Ovary (tissue), 10 donors: ENCODE measurements at regions of chr7 and their contacts with region 1.

Region 1: DNA sequence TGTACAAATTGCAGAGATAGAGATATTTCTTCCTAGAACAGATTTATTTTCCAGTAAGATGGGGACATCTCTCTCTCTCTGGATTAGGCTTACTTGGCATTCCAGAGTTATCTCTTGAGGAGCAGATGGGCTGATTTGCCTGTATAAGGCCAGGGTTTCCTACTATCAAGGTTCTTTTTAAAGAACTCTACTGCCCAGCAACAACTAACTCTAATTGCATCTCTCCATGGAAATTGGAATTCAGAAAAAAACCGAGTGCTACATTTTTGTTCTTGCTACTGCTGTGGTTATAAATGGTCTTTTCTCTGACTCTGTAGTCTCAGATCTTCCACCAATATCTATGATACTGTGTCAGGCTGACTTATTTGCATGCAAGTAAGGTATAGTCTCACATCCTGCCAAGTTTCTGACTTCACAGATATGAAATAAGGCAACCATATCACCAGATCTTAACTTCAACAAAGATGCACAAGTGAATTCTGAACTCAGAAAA is 161.1 kb downstream of the CRPPA start:
- DNase-seq: no peak
- H3K4me3 ChIP-seq: no peak overlapping the region
- H3K27ac ChIP-seq: no peak overlapping the region
- H3K4me1 ChIP-seq: no peaks in the 10 kb centered on the region
- H3K27me3 ChIP-seq: no peaks in the 10 kb centered on the region
- CTCF ChIP-seq: no peak
- EP300 ChIP-seq: no peak
- POLR2A ChIP-seq: no peak

Region 2: DNA sequence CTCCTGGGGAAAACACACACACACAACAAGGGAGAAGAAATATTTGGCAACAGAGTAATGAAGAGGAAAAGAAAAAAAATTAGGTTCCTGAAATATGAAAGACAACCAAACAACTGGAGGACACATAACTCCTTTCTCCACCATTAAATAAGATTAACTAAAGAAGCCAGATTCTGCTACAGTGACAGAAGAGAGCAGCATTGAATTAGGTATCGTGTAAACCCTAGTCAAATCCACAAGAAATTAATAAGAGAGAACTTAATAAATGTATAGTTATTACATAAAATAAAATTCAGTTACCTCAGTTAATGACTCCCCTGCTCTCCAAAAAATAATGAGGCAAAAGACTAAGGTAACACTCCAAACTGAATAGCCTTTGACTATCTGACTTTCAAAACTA is 145.6 kb before region 1 on chr7:
- intact Hi-C with region 1: no loop called
- DNase-seq: no peak
- H3K4me3 ChIP-seq: no peak overlapping the region
- H3K27ac ChIP-seq: no peak overlapping the region
- H3K4me1 ChIP-seq: no peaks in the 10 kb centered on the region
- H3K27me3 ChIP-seq: no peaks in the 10 kb centered on the region
- CTCF ChIP-seq: no peak
- EP300 ChIP-seq: no peak
- POLR2A ChIP-seq: no peak

Region 3: GRCh38 chr7:16129431-16130116 is 130.7 kb before region 1 on chr7:
- intact Hi-C with region 1: no loop called
- DNase-seq: no peak
- H3K4me3 ChIP-seq: no peak overlapping the region
- H3K27ac ChIP-seq: no peak overlapping the region
- H3K4me1 ChIP-seq: no peaks in the 10 kb centered on the region
- H3K27me3 ChIP-seq: no peaks in the 10 kb centered on the region
- CTCF ChIP-seq: no peak
- EP300 ChIP-seq: no peak
- POLR2A ChIP-seq: no peak

Region 4: GRCh38 chr7:16344927-16345326 is 84.6 kb after region 1 on chr7:
- intact Hi-C with region 1: loop called in 1 of 4 experiments (anchors 5 kb)
- DNase-seq: no peak
- H3K4me3 ChIP-seq: no peak overlapping the region
- H3K27ac ChIP-seq: no peak overlapping the region
- H3K4me1 ChIP-seq: no peaks in the 10 kb centered on the region
- H3K27me3 ChIP-seq: no peaks in the 10 kb centered on the region
- CTCF ChIP-seq: no peak
- EP300 ChIP-seq: no peak
- POLR2A ChIP-seq: no peak